ENCODE measurements at regions of chr3 and their contacts with region 1.

Region 1: DNA sequence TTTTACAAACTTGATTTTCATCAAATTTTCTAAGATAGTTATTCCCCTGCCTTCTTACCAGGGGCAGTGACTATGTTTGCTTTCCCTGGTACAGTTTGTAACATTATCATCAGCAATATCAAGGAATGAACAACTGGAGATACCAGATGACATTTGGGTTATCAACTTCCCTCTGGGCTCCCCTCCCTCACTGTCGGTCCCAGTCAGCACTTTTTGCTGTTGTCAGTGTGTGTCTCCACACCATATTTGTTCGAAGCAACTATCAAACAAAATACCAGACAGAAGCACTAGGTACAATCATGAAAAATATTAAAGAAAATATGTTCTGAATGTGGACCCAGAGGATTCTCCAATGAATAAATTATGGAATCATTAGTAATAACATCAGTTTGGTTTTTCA is 75.3 kb downstream of the PLOD2 start:
- DNase-seq: no peak
- ATAC-seq: no peak
- H3K4me3 ChIP-seq: no peak overlapping the region
- H3K27ac ChIP-seq: no peak overlapping the region
- H3K4me1 ChIP-seq: peaks cover 0 to 4% (median 0%) of the 10 kb centered on the region in 12 donors
- H3K27me3 ChIP-seq: no peaks in the 10 kb centered on the region
- CTCF ChIP-seq: no peak
- POLR2A ChIP-seq: no peak

Region 2: DNA sequence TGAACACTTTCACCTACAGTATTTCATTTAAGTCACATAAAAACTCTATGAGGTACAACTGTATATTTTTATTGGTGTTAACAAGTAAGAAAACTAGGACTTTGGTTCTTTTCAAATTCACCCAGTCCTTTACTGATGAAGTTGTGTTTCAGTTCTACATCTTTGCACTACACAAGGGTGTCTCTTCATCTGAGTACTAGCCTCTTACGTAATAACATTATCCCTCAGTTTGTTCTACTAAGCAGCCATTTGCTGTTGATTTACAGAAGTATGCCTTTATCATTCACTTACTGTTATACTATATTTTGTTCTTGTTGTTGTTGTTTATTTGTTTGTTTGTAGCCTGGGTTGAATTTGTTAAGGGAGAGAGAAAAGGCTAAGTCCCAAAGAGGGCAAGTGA is 236.6 kb before region 1 on chr3:
- intact Hi-C with region 1: no loop called
- DNase-seq: no peak
- ATAC-seq: no peak
- H3K4me3 ChIP-seq: no peak overlapping the region
- H3K27ac ChIP-seq: no peak overlapping the region
- H3K4me1 ChIP-seq: no peaks in the 10 kb centered on the region
- H3K27me3 ChIP-seq: no peaks in the 10 kb centered on the region
- CTCF ChIP-seq: no peak
- POLR2A ChIP-seq: no peak

Region 3: DNA sequence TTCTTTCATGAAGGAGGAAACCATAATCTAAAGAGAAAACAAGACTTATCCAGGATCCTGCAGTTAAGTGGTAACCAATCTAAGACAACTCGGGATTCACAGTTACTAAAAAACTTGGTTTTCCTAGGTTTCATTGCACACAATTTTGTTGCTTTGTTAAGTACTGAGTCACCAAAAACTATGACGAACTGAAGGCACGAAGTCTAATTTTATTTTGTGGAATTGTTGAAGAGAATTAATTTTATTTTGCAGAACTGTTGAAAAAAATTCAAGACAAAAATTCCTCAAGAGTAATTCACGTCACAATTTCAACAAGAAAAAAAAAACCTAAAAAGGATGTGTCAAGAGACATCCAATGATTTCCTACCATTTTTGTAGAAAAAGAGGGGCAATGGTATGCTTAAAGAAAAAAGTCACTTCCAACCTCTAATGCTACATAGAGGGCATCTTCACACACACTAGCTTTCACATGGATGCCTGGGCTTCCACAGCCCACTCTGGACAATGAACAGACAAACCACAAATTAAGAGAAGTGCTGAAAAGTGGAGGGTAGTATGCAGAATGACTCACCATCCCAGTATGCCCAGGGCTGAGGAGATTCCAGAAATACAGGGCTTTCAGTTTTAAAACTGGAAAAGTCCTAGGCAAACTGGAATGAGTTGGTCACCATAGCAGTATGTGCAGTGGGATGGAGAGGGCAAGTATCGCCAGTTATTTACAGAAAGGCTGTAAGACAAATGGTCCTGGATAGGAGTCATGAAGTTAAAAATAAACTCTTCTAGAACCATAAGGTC is 46.1 kb after region 1 on chr3:
- intact Hi-C with region 1: loop called in 1 of 10 experiments (anchors 10 kb)
- DNase-seq: no peak
- ATAC-seq: peak; percentile 54 to 75 (median 66)
- H3K4me3 ChIP-seq: no peak overlapping the region
- H3K27ac ChIP-seq: peak overlapping the region in 1 of 12 donors; percentile 13
- H3K4me1 ChIP-seq: peaks cover 0 to 44% (median 14%) of the 10 kb centered on the region in 12 donors
- H3K27me3 ChIP-seq: no peaks in the 10 kb centered on the region
- CTCF ChIP-seq: no peak
- POLR2A ChIP-seq: no peak

Region 4: DNA sequence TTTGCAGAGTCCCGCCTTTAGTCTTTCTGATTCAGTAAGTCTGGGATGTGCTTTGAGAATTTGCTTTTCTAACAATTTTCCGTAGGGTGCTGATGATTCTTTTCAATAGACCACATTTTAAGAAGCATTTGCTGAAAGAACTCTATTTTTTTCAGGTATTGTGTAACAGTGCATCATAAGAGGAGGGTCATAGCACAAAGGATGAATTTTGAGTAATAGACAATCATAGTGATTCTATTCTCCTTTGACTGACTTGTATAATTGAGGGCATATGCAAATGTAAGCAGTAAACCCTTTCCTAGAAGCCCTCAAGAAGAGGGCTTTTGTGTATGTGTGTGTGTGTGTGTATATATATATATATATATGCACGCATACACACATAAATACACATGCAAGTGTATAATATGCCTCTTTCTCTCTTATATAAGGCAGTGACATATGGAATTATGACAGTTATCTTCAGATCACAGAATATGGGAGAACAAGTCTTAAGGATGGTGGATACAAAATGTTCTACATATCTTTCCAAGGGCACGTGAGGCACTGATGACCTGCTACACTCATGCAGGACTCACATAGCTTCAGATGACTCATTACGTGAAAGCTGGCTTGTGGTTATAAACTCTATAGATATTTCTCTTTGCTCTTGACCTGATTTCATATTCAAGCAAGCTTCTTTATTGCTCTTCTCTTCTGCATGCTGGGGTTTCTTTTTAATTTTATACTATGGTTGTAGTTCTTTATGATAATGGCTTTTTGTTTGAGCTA is 465.2 kb after region 1 on chr3:
- intact Hi-C with region 1: no loop called
- DNase-seq: no peak
- ATAC-seq: no peak
- H3K4me3 ChIP-seq: no peak overlapping the region
- H3K27ac ChIP-seq: peak overlapping the region in 1 of 12 donors; percentile 58
- H3K4me1 ChIP-seq: peaks cover 0 to 18% (median 0%) of the 10 kb centered on the region in 12 donors
- H3K27me3 ChIP-seq: no peaks in the 10 kb centered on the region
- CTCF ChIP-seq: no peak
- POLR2A ChIP-seq: no peak